Adrenal gland (tissue), 19 donors: ENCODE measurements at regions of chr10 and their contacts with region 1.

Region 1: DNA sequence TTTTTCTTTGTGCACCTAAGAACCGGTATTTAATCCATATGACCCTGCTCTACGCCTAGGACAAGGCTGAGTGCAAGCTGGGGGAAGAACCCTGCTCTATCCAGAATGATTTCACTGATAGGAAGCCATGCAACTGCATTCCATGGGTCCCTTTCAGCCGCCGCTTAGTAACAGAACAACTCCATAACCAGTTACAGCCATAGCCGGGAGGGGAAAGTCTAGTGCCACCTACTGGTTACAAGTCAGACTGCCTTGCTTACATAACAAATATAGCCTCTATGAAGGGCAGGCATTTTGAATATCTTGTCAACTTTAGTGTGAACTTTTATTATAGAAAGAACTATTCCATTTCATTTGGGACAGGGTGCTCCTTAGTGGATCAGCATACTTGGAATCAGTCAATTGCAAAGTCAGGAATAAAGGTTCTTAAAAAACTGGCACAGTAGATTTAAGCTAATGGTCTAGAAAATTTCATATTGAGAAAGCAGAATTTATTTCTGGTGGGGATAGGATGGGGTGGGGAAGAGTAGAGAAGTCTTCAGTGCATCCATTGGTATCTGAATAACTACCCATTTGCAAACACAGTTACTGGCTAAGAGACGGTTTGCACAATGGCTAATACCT is 521.7 kb downstream of the ADRA2A start:
- DNase-seq: peak; percentile 48 to 82 (median 60)
- H3K4me3 ChIP-seq: no peak overlapping the region
- H3K27ac ChIP-seq: no peak overlapping the region
- H3K4me1 ChIP-seq: no peaks in the 10 kb centered on the region
- H3K27me3 ChIP-seq: no peaks in the 10 kb centered on the region
- CTCF ChIP-seq: peak; percentile 55 to 82 (median 79)
- POLR2A ChIP-seq: no peak

Region 2: DNA sequence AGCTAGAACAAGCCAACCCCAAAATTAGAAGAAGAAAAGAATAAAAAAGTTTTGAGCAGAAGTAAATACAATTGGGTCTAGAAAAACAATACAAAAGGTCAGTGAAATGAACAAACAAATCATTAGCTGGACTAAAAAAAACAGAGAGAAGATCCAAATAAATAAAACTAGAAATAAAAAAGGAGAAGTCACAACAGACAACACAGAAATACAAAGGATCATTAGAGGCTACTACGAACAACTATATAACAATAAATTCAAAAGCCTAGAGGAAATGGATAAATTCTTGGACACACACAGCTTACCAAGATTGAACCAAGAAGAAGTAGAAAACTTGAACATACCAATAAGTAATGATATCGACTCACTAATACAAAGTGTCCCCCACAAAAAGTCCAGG is 535.1 kb before region 1 on chr10:
- intact Hi-C with region 1: loop called in 1 of 2 experiments (anchors 10 kb)
- DNase-seq: no peak
- H3K4me3 ChIP-seq: no peak overlapping the region
- H3K27ac ChIP-seq: no peak overlapping the region
- H3K4me1 ChIP-seq: no peaks in the 10 kb centered on the region
- H3K27me3 ChIP-seq: peaks cover 5% of the 10 kb centered on the region
- CTCF ChIP-seq: no peak
- POLR2A ChIP-seq: no peak

Region 3: GRCh38 chr10:111076191-111076681 is 522.3 kb before region 1 on chr10:
- intact Hi-C with region 1: loop called in 1 of 2 experiments (anchors 10 kb)
- DNase-seq: peak; percentile 43 to 76 (median 63)
- H3K4me3 ChIP-seq: peak overlapping the region in 2 of 4 donors; percentile 37 to 51
- H3K27ac ChIP-seq: no peak overlapping the region
- H3K4me1 ChIP-seq: peaks cover 5 to 23% of the 10 kb centered on the region in 2 donors
- H3K27me3 ChIP-seq: peaks cover 43% of the 10 kb centered on the region
- CTCF ChIP-seq: peak; percentile 56 to 78 (median 68)
- POLR2A ChIP-seq: no peak

Region 4: GRCh38 chr10:111323389-111323966 is 275.1 kb before region 1 on chr10:
- intact Hi-C with region 1: no loop called
- DNase-seq: no peak
- H3K4me3 ChIP-seq: no peak overlapping the region
- H3K27ac ChIP-seq: no peak overlapping the region
- H3K4me1 ChIP-seq: no peaks in the 10 kb centered on the region
- H3K27me3 ChIP-seq: no peaks in the 10 kb centered on the region
- CTCF ChIP-seq: peak in 1 of 6 experiments; percentile 17
- POLR2A ChIP-seq: no peak

Region 5: GRCh38 chr10:111360260-111360925 is 238.2 kb before region 1 on chr10:
- intact Hi-C with region 1: no loop called
- DNase-seq: peak; percentile 23 to 68 (median 34)
- H3K4me3 ChIP-seq: no peak overlapping the region
- H3K27ac ChIP-seq: no peak overlapping the region
- H3K4me1 ChIP-seq: no peaks in the 10 kb centered on the region
- H3K27me3 ChIP-seq: no peaks in the 10 kb centered on the region
- CTCF ChIP-seq: peak; percentile 29 to 52 (median 50)
- POLR2A ChIP-seq: no peak

Region 6: GRCh38 chr10:111732166-111732785 is 133.7 kb after region 1 on chr10:
- intact Hi-C with region 1: no loop called
- DNase-seq: no peak
- H3K4me3 ChIP-seq: no peak overlapping the region
- H3K27ac ChIP-seq: no peak overlapping the region
- H3K4me1 ChIP-seq: no peaks in the 10 kb centered on the region
- H3K27me3 ChIP-seq: no peaks in the 10 kb centered on the region
- CTCF ChIP-seq: no peak
- POLR2A ChIP-seq: no peak